HEK293 (cell line): ENCODE measurements at regions of chr11 and their contacts with region 1.

Region 1: DNA sequence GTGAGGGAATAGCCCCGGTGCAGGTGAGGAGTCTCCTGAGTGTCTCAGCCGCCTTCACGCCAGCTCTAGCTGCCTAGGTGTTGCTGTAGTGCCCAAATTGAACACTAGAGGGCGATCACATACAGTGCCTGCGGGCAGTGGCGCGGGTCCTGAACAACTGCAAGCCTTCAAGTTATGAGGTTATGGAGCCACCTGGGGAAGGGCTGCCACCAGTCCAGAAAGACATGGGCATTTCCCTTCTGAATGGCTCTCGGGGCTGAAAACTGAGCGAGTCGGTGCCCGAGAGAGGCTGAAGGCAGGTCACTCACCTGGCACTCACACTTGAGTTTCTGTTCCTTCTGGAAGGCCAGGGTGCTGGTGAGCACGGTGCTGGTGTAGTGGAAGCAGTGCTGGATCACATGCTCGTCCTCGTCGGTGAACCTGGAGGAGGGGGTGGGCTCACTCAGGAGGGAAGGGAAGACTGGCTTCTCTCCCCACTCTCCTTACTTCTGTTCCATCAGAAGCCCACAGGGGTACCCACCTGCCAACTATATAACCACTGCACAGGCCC is 88.4 kb downstream of the PDE2A start:
- H3K4me3 ChIP-seq: no peak overlapping the region
- H3K27ac ChIP-seq: no peak overlapping the region
- H3K4me1 ChIP-seq: no peaks in the 10 kb centered on the region
- CTCF ChIP-seq: peak; percentile 61

Region 2: GRCh38 chr11:72598906-72599305 is 13.1 kb after region 1 on chr11:
- CTCF ChIA-PET with region 1: interaction called, 12 read pairs
- POLR2A ChIA-PET with region 1: no interaction called
- H3K4me3 ChIP-seq: no peak overlapping the region
- H3K27ac ChIP-seq: no peak overlapping the region
- H3K4me1 ChIP-seq: no peaks in the 10 kb centered on the region
- CTCF ChIP-seq: no peak

Region 3: GRCh38 chr11:72642884-72643511 is 57.2 kb after region 1 on chr11:
- CTCF ChIA-PET with region 1: interaction called, 47 read pairs
- POLR2A ChIA-PET with region 1: no interaction called
- H3K4me3 ChIP-seq: peak overlapping the region; percentile 39
- H3K27ac ChIP-seq: no peak overlapping the region
- H3K4me1 ChIP-seq: no peaks in the 10 kb centered on the region
- CTCF ChIP-seq: peak; percentile 88

Region 4: DNA sequence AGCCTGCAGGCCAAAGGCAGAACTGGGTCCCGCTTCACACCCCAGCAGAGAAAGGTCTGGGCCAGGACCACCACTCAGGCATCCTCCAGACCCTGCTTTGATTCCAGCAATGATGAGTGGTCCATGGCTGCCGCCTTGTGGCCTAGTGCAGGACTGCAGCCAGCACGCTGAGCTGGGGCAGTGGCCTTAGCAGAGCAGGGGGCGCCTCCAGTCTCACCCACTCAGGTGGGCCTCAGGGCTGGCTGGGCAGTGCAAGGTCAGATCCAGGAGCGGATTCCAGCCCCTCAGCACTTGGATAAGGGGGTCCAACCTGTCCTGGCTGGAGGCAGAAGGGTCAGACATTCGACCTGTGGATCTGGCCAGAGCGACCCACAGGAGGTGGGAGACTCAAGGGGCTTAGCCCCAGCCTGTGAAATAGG is 98.0 kb after region 1 on chr11:
- CTCF ChIA-PET with region 1: interaction called, 50 read pairs
- POLR2A ChIA-PET with region 1: no interaction called
- H3K4me3 ChIP-seq: no peak overlapping the region
- H3K27ac ChIP-seq: no peak overlapping the region
- H3K4me1 ChIP-seq: no peaks in the 10 kb centered on the region
- CTCF ChIP-seq: peak; percentile 79